Right ventricle myocardium inferior (tissue), 1 donor: ENCODE measurements at regions of chr1 and their contacts with region 1.

Region 1: DNA sequence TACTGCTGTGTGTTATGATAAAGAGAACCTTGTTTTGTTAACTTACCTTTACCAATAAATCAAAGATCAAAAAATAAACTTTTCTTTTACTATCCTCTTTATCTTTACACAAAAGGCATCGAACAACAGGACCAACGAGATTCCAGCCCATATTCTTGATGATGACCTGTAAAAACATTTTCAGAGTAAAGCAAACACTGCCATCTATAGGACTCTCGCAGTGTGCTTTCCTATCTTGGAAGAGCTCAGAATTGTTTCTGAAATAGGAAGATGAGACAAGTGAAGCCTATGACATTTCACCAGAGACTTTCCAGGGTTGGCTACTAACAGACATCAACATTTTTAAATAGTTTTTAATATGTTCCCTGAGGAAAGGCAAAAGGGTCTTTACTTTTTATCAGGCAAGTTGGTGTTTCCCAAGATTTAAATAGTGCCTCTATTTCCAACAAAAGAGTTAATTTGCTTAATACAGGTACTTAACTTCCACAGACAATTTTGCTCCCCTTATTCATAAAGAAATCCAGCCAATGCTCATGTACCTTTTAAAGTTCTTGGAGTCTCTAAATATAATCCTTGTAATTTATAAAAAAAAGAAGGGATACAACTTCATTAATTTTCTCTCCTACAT is 7.3 kb downstream of the GLMN start:
- DNase-seq: no peak
- ATAC-seq: no peak

Region 2: GRCh38 chr1:91997607-91998195 is 293.8 kb before region 1 on chr1:
- intact Hi-C with region 1: loop called (anchors 5 kb)
- DNase-seq: no peak
- ATAC-seq: no peak

Region 3: DNA sequence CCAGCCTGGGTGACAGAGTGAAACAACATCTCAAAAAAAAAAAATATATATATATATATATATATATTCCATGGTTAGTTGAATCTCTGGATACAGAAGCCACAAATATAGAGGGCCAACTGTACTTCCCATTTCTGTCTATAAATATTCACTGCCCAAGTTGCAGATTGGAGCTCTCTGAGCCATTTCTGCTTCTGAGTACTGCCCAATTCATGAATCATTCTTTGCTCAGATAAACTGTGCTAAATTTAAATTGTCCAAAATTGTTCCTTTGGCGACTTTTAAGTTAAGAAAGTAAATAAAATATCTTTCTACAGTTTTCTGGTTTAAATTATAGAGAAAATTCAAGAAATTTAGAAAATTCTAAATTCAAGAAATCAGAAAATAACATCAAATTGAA is 97.0 kb before region 1 on chr1:
- intact Hi-C with region 1: no loop called
- DNase-seq: no peak
- ATAC-seq: no peak